IMR-90 (cell line): ENCODE measurements at regions of chr5 and their contacts with region 1.

Region 1: DNA sequence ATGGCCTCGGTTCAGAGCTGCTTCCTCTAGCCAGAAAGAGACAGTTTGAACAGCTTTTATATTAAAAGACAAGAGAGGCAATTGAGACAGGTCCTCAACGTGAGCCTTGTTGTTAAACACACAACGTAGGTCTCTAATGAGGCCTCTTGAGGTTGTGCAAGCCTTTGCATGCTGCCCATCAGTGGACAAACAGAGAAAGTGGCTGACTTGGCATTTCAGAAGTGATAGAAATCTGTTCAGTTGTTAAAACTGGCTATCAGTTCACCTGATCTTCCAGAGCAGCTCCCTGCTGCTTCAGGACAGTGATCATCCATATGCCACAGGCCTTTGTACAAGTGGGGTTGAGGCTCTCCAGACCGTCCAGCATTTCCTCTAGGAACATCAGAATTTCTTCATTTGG is 58.8 kb downstream of the MROH2B start:
- DNase-seq: no peak
- ATAC-seq: no peak
- H3K4me3 ChIP-seq: no peak overlapping the region
- H3K27ac ChIP-seq: no peak overlapping the region
- H3K4me1 ChIP-seq: no peaks in the 10 kb centered on the region
- H3K27me3 ChIP-seq: no peaks in the 10 kb centered on the region
- CTCF ChIP-seq: no peak
- POLR2A ChIP-seq: no peak
- RAD21 ChIP-seq: no peak

Region 2: DNA sequence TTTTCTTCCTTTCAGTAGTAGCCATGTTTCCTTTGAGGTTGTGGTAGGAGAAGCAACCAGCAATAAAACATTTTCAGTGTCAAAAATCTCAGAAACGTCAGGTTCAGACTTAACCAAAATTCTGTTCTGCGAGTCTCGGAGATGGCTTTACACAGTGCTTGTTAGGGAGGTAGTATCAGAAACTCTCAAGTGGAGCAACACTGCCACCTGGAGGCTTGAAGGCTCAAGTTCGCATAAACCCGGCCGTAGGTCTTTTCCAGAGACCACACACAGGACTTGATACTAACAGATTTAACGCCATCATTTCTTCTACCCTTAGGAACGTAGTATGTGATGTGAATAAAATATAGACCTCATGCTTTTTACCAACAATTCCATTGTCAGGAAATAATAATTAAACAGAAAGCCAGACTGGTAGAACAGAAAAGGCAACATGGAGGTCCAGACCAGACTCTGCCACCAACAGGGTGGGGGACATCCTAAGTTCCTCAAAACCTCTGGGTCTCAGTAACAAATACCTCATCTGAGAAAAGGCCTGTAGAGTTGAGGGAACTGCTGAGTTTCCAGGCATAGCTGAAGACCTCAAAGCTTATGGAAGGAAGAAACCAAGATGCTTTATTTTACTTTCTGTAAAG is 324.1 kb before region 1 on chr5:
- CTCF ChIA-PET with region 1: no interaction called
- POLR2A ChIA-PET with region 1: no interaction called
- dilution Hi-C with region 1: no loop called
- in situ Hi-C with region 1: no loop called
- intact Hi-C with region 1: no loop called
- DNase-seq: peak; percentile 89
- ATAC-seq: peak; percentile 86
- H3K4me3 ChIP-seq: no peak overlapping the region
- H3K27ac ChIP-seq: peak overlapping the region; percentile 26; the same call in 1 of the 2 replicates
- H3K4me1 ChIP-seq: peaks cover 5% of the 10 kb centered on the region
- H3K27me3 ChIP-seq: no peaks in the 10 kb centered on the region
- CTCF ChIP-seq: peak; percentile 91
- POLR2A ChIP-seq: no peak; the same call in 1 of the 2 replicates
- RAD21 ChIP-seq: peak; percentile 98

Region 3: GRCh38 chr5:41048986-41049385 is 36.7 kb after region 1 on chr5:
- CTCF ChIA-PET with region 1: no interaction called
- POLR2A ChIA-PET with region 1: no interaction called
- dilution Hi-C with region 1: no loop called
- in situ Hi-C with region 1: no loop called
- intact Hi-C with region 1: loop called (anchors 5 kb)
- DNase-seq: no peak
- ATAC-seq: no peak
- H3K4me3 ChIP-seq: no peak overlapping the region
- H3K27ac ChIP-seq: no peak overlapping the region
- H3K4me1 ChIP-seq: no peaks in the 10 kb centered on the region
- H3K27me3 ChIP-seq: no peaks in the 10 kb centered on the region; the same call in 1 of the 2 replicates
- CTCF ChIP-seq: no peak
- POLR2A ChIP-seq: no peak
- RAD21 ChIP-seq: no peak